Dorsolateral prefrontal cortex (tissue), 120 donors: ENCODE measurements at regions of chr9 and their contacts with region 1.

Region 1: DNA sequence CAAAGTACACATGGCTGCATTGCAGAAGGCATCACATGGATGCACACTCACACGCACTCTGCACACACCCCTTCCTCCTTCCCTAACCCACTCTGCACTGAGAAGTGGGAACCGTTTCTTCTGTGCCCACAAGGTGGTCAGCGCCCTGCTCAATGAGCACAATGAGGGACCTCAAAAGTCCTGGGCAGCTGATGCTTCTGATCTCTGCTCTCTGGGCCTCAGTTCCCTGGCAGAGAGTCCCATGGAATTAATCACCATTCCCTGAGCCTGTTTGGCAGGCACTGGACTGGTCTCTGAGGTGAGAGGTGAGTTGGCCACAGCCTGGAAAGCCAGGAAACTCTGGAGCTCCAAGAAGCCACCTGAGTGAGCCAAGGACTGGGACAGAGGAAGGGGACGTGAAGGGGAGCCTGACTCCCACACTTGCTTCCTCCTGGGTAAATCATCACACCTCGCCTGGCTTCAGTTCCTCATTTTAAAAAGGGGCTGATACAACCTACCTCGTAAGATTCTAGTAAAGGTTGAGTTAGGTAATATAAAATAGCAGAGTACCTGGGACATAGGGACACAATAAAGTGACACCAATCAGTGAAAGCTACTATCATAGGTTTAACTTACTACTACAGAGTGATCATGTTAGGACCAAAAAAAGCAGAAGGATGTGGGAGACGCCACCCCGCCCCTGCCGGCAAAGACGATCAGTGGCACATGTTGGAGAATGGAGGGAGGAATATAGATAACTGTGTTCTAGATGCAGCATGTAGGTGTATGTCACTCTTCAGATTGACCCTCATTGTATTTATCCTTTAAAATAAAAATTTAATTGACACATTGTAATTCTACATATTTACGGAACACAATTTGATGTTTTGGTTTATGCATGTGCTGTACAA is 21.1 kb upstream of the IGFBPL1 start:
- DNase-seq: no peak
- H3K4me3 ChIP-seq: no peak overlapping the region
- H3K27ac ChIP-seq: no peak overlapping the region
- H3K27me3 ChIP-seq: no peaks in the 10 kb centered on the region
- CTCF ChIP-seq: no peak

Region 2: DNA sequence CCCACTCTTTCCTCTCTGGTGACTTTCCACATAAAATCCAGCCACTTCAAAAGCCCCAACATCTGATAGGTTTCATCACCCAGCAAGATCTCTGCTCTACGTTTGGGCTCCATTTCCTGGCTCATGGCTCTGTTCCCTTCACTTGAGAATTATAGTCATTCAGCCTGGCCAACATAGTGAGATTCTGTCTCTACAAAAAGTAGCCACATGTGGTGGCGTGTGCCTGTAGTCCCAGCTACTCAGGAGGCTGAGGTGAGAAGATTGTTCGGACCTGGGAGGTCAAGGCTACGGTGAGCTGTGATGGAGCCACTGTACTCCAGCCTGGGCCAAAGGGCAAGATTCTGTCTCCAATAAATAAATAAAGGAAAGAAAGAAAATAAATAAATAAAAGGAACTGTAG is 62.2 kb after region 1 on chr9:
- intact Hi-C with region 1: loop called in 1 of 2 experiments (anchors 10 kb)
- DNase-seq: no peak
- H3K4me3 ChIP-seq: no peak overlapping the region
- H3K27ac ChIP-seq: no peak overlapping the region
- H3K27me3 ChIP-seq: peaks cover 0 to 3% (median 0%) of the 10 kb centered on the region in 45 donors
- CTCF ChIP-seq: no peak